ENCODE measurements at regions of chr16 and their contacts with region 1.

Region 1: GRCh38 chr16:15874745-15875314 is 13.6 kb downstream of the CEP20 start:
- DNase-seq: no peak
- ATAC-seq: peak; percentile 77
- H3K4me3 ChIP-seq: no peak overlapping the region
- H3K27ac ChIP-seq: peak overlapping the region in 1 of 2 donors; percentile 33
- H3K4me1 ChIP-seq: peaks cover 0 to 2% of the 10 kb centered on the region in 2 donors
- H3K27me3 ChIP-seq: no peaks in the 10 kb centered on the region

Region 2: GRCh38 chr16:15988268-15989013 is 113.6 kb after region 1 on chr16:
- intact Hi-C with region 1: no loop called
- DNase-seq: no peak
- ATAC-seq: no peak
- H3K4me3 ChIP-seq: no peak overlapping the region
- H3K27ac ChIP-seq: peak overlapping the region; percentile 47 to 90
- H3K4me1 ChIP-seq: peaks cover 0 to 3% of the 10 kb centered on the region in 2 donors
- H3K27me3 ChIP-seq: no peaks in the 10 kb centered on the region

Region 3: DNA sequence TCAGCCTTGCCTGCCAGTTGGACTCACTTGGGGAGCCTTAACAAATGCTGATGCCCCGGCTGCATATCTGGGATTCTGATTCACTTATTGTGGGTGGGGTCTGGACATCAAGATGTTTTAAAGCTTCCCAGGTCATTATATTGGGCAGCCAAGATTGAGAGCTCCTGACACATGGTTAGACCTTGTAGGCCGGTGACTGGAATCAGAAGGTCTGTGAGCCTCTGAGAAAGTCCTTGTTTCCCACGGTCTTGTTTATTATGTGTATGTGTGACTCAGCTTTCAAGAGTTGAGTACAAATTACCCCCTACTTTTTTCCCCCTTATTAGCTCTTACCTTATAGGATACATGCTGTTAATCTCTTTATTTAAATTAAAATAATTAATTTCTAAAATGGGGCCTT is 178.1 kb after region 1 on chr16:
- intact Hi-C with region 1: no loop called
- DNase-seq: no peak
- ATAC-seq: no peak
- H3K4me3 ChIP-seq: no peak overlapping the region
- H3K27ac ChIP-seq: no peak overlapping the region
- H3K4me1 ChIP-seq: peaks cover 2 to 3% of the 10 kb centered on the region in 2 donors
- H3K27me3 ChIP-seq: no peaks in the 10 kb centered on the region

Region 4: GRCh38 chr16:16096121-16096857 is 221.5 kb after region 1 on chr16:
- intact Hi-C with region 1: loop called in 1 of 2 experiments (anchors 10 kb)
- DNase-seq: peak; percentile 77 to 87
- ATAC-seq: peak; percentile 74
- H3K4me3 ChIP-seq: no peak overlapping the region
- H3K27ac ChIP-seq: peak overlapping the region in 1 of 2 donors; percentile 85
- H3K4me1 ChIP-seq: peaks cover 0 to 5% of the 10 kb centered on the region in 2 donors
- H3K27me3 ChIP-seq: no peaks in the 10 kb centered on the region

Region 5: DNA sequence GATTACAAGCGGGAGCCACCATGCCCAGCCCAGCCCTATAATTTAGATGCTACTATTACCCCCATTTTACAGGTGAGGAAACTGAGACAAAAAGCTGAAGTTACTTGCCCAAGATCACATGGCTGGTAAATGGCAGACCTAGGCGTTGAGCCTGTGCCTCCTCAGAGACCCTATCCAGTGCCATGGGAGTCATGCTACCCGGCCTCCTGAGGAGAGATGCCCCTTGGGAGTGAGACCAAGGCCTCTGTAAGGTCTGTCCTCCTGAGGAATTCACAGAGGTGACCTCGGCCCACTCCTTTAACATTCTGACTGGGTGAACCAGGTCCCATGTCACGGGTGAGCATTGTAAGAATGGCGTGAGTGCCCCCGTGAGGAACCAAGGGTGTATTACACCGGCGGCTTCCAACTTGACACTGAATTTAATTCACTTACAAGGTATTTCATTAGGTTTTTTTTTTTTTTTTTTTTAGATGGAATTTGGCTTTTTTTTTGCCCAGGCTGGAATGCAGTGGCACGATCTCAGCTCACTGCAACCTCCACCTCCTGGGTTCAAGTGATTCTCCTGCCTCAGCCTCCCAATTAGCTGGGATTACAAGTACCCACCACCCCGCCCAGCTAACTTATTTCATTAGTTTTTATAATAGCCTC is 252.8 kb after region 1 on chr16:
- intact Hi-C with region 1: loop called in 1 of 2 experiments (anchors 2 kb)
- DNase-seq: peak; percentile 65 to 87
- ATAC-seq: peak; percentile 92
- H3K4me3 ChIP-seq: no peak overlapping the region
- H3K27ac ChIP-seq: peak overlapping the region in 1 of 2 donors; percentile 37
- H3K4me1 ChIP-seq: no peaks in the 10 kb centered on the region
- H3K27me3 ChIP-seq: no peaks in the 10 kb centered on the region

Measured in aorta (tissue), 5 donors.